ENCODE measurements at regions of chr13 and their contacts with region 1.

Region 1: DNA sequence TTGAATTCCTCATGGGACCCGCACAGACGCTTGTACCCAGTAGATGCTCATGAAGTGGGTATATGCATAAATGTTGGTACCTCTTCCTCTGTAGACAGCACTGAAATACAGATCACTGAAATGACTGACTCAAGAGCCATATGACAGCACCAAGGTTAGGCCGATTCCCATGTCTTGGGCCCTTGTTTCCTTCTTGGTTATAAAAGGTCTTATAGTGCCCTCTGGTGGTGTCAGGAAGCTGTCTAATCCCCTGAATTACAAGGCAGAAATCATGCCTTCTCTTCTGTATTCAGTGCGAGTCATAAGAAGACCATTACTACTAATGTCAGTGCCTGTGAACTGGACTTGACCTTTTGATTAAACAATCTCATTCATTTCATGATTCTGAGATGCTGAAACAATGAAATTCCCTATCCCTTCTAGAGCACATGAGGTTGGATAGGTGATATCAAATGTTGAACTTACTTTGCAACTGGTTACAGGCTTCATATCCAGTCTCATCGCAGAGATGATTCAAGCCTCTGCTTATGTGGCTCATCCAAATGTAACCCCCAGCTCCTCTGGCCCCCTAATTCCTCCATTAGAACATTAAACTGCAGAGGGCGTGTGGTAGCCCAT is 59.7 kb downstream of the SPATA13 start:
- DNase-seq: peak in 1 of 2 donors; percentile 60
- ATAC-seq: peak; percentile 60

Region 2: DNA sequence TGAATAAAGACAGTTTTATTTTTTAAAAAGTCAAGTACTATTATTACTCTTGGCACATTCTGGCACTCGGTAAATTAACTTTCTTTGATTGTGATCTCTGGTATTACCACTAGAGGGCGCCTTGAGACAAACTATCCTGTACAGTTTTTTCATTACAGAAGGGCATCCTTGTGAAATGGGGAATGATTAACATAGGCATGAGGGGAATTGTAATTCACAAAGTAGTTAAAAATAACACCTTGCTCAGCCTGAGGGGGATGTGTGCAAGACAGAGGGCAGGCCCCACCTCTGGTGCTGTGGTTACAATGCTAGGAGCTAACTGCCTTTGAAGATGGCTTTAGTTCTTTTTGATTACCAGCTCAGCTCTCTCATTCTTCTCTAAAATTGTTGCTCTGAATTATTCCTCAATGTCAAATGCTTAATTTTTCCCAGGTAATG is 298.7 kb before region 1 on chr13:
- intact Hi-C with region 1: loop called in 1 of 2 experiments (anchors 10 kb)
- DNase-seq: no peak
- ATAC-seq: peak; percentile 56

Region 3: GRCh38 chr13:24022568-24022967 is 197.6 kb before region 1 on chr13:
- intact Hi-C with region 1: loop called in 1 of 2 experiments (anchors 2 kb)
- DNase-seq: no peak
- ATAC-seq: no peak

Region 4: GRCh38 chr13:24053519-24054251 is 166.5 kb before region 1 on chr13:
- intact Hi-C with region 1: loop called in 1 of 2 experiments (anchors 10 kb)
- DNase-seq: peak; percentile 60 to 61
- ATAC-seq: peak; percentile 97